Left ventricle myocardium superior (tissue), 1 donor: ENCODE measurements at regions of chr17 and their contacts with region 1.

Region 1: GRCh38 chr17:59004338-59005111 is 102.2 kb downstream of the TRIM37 start:
- DNase-seq: peak; percentile 37
- ATAC-seq: peak; percentile 72

Region 2: GRCh38 chr17:58517734-58518609 is 486.6 kb before region 1 on chr17:
- intact Hi-C with region 1: loop called (anchors 10 kb)
- DNase-seq: peak; percentile 100
- ATAC-seq: peak; percentile 89

Region 3: DNA sequence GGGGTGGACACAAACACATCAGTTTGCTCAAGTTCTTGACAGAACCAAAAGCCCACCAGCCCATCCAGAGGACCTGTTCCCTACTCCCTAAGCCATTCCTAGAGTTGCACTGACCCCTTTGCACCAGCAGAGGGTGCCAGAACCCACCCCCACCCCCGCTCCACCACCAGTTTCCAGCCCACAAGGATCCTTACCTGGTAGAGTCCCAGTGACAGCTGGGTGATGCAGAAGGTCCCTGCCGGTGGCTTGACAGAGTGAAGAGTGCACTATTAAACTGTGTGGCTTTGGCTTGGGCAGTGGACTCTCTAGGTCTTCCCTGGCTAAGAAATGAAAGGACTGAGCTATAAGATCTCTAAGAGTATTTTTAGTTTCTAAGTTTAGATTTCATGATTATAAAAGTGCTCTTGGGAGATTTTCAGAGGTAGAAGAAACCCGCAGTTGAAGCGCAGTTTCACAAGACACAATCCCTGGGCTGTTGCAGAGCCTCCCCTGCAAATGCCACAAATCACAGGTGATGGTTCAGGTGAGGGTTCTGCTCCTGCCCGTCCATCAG is 416.7 kb before region 1 on chr17:
- intact Hi-C with region 1: loop called (anchors 5 kb)
- DNase-seq: peak; percentile 54
- ATAC-seq: peak; percentile 77

Region 4: GRCh38 chr17:58710936-58711775 is 293.4 kb before region 1 on chr17:
- intact Hi-C with region 1: loop called (anchors 5 kb)
- DNase-seq: no peak
- ATAC-seq: no peak

Region 5: DNA sequence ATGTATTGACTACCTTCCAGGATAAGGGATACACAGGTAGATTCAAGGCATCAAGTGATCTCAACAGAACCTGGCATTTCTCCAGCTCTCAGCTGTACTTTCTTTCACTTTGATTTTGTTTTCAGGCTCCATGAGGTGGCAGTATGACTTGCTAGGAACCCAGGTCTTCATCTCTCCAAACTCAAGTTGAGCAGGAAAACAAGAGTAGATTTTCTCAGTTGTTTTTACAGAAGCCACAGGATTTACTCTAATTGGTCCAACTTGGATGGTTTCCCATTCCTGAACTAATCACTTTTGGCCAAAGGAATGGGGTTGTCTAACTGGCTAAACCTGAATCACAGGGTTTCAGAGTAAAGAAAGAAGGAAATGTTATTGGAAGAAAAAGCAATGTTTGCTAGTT is 44.5 kb before region 1 on chr17:
- intact Hi-C with region 1: no loop called
- DNase-seq: no peak
- ATAC-seq: no peak